HepG2 (cell line): ENCODE measurements at regions of chr17 and their contacts with region 1.

Region 1: DNA sequence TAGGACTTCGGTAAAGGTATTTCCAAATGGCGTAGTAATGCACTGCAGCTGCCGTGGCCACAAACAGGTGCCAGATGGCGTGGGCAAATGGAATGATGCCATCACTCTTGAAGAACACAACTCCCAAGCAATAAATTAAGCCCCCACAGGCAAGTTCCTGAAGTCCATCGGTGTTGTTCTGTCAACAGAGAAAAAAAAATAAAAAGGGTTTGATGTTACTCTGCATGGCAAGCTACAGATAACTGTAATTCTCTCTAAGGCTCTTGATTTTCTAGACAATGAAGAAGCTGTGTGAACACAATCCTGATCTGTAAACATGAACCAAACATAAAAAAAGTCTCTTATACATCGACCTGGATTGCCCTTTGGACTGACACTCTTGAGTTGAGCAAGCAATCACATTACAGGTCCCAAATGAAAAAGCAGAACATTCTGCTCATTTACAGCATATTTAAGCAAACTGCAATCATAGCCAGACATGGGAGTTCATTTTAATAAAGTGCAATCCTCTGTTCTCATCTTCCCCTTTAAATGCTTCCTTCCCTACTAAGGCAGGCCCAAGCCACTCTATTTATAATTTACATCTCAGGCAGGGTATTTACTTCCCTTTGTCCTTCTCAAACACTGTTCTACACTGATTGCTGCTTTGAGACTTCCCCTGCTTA is 27.1 kb downstream of the MMD start:
- DNase-seq: peak; percentile 96
- ATAC-seq: peak; percentile 79
- H3K4me3 ChIP-seq: peak overlapping the region in 1 of 3 experiments; percentile 0; a peak in 1 of 6 replicates
- H3K27ac ChIP-seq: peak overlapping the region; percentile 75
- H3K4me1 ChIP-seq: peaks cover 71% of the 10 kb centered on the region
- H3K27me3 ChIP-seq: no peaks in the 10 kb centered on the region
- CTCF ChIP-seq: no peak
- EP300 ChIP-seq: peak; percentile 31 to 91; a peak in 3 of 4 replicates
- POLR2A ChIP-seq: peak in 1 of 2 experiments; percentile 7; a peak in 2 of 4 replicates
- RAD21 ChIP-seq: no peak

Region 2: GRCh38 chr17:55410722-55411462 is 16.4 kb after region 1 on chr17:
- CTCF ChIA-PET with region 1: no interaction called
- POLR2A ChIA-PET with region 1: interaction called, 54 read pairs
- in situ Hi-C with region 1: no loop called
- intact Hi-C with region 1: loop called (anchors 1 kb)
- DNase-seq: peak; percentile 55
- ATAC-seq: no peak
- H3K4me3 ChIP-seq: no peak overlapping the region
- H3K27ac ChIP-seq: peak overlapping the region; percentile 87
- H3K4me1 ChIP-seq: peaks cover 100% of the 10 kb centered on the region
- H3K27me3 ChIP-seq: no peaks in the 10 kb centered on the region
- CTCF ChIP-seq: no peak
- EP300 ChIP-seq: 0 out of 4 replicates have a peak, but pooled peaks of 1 of the 2 experiments have one; percentile 31
- POLR2A ChIP-seq: no peak; a peak in 1 of 4 replicates
- RAD21 ChIP-seq: no peak

Region 3: DNA sequence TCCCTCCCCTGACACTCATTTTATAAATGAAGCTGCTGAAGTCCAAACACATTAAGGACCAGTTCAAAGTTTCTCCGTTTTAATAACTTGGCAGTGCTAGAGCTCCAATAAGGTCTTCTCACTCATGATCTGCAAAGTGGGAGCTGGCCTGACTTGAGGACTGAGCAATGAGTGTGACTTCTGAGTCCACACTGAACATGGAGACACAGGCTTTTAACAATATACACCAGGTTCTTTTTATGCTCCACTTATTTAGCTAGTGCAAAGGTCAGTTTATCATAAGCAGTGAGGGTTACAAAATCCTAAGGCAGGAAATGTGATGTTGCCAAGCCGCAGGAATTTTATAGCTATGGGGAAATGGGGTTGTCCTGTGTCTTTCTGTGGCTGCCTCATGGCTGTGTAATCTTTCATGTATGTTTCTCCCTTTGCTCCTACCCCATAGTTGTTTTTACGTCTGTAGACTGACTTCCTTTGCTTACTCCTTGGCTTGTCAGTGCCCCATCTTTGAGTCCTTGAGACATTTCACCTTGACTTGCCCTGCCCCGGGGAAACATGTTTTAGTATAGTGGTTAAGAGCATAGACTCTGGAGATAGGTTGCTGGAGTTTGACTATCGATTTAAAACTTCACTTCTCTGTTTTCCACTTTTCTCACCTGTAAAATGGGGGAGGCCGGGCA is 39.3 kb after region 1 on chr17:
- CTCF ChIA-PET with region 1: no interaction called
- POLR2A ChIA-PET with region 1: interaction called, 23 read pairs
- in situ Hi-C with region 1: no loop called
- intact Hi-C with region 1: loop called (anchors 1 kb)
- DNase-seq: peak; percentile 99
- ATAC-seq: peak; percentile 89
- H3K4me3 ChIP-seq: peak overlapping the region in 2 of 3 experiments; percentile 6 to 44; a peak in 2 of 6 replicates
- H3K27ac ChIP-seq: peak overlapping the region; percentile 92
- H3K4me1 ChIP-seq: peaks cover 80% of the 10 kb centered on the region
- H3K27me3 ChIP-seq: no peaks in the 10 kb centered on the region
- CTCF ChIP-seq: no peak
- EP300 ChIP-seq: peak; percentile 86 to 95; a peak in 3 of 4 replicates
- POLR2A ChIP-seq: peak; percentile 64 to 93
- RAD21 ChIP-seq: no peak

Region 4: DNA sequence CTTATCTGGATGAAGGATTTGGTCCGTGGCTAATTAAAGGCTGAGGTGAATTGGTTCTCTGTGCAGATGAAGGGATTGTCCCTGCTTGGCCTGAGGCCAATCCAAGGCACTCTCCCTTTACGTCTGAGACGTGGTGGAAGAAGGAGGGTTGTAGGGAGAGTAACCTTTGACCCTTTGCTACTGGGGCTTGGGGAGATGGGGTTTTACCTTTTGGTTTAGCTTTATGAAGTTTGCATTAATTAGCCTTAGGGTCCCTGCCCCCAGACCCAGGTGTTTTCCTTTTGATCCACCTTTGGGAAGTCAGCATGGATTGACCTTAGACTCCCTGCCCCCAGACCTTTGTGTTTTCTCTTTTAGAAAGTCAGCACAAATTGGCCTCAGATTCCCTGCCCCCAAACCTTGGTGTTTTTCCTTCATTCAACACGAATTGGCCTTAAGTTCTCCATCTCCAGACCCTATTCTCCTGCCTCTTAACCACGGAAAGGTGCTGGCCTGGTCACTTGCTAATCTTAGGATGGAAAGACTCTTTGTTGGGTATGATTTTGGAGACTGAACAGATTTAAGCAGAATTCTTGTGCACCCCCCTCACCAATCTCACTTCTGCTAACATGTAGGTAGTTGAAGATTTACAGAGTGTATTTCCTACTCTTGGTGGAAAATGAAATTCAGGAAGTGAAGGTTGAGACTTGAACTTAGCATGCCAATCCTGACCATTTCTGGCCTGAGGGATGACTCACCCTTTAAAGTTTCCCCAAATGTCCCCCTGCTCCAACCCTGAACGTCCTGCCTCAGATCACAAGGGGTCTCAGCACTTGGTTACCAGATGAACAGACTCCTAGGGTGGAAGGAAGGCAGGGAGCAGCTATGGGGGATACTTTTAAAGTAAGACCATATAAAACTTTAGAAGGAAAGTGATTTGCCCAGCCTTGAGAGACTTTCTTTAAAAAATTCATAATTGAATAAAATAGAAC is 50.3 kb after region 1 on chr17:
- CTCF ChIA-PET with region 1: no interaction called
- POLR2A ChIA-PET with region 1: interaction called, 18 read pairs
- in situ Hi-C with region 1: no loop called
- intact Hi-C with region 1: no loop called
- DNase-seq: peak; percentile 91
- ATAC-seq: peak; percentile 63
- H3K4me3 ChIP-seq: peak overlapping the region in 1 of 3 experiments; percentile 24; a peak in 1 of 6 replicates
- H3K27ac ChIP-seq: peak overlapping the region; percentile 88
- H3K4me1 ChIP-seq: peaks cover 94% of the 10 kb centered on the region
- H3K27me3 ChIP-seq: no peaks in the 10 kb centered on the region
- CTCF ChIP-seq: 0 out of 2 replicates have a peak, but pooled peaks have one; percentile 5
- EP300 ChIP-seq: peak in 1 of 2 experiments; percentile 64; a peak in 2 of 4 replicates
- POLR2A ChIP-seq: peak in 1 of 2 experiments; percentile 30; a peak in 3 of 4 replicates
- RAD21 ChIP-seq: no peak

Region 5: GRCh38 chr17:55513885-55514591 is 119.5 kb after region 1 on chr17:
- CTCF ChIA-PET with region 1: interaction called, 6 read pairs
- POLR2A ChIA-PET with region 1: interaction called, 7 read pairs
- in situ Hi-C with region 1: no loop called
- intact Hi-C with region 1: loop called (anchors 1 kb)
- DNase-seq: peak; percentile 84
- ATAC-seq: peak; percentile 81
- H3K4me3 ChIP-seq: no peak overlapping the region
- H3K27ac ChIP-seq: no peak overlapping the region
- H3K4me1 ChIP-seq: peaks cover 31% of the 10 kb centered on the region
- H3K27me3 ChIP-seq: peaks cover 0 to 1% of the 10 kb centered on the region in 2 experiments; a peak in 1 of 5 replicates
- CTCF ChIP-seq: peak; percentile 93
- EP300 ChIP-seq: 0 out of 4 replicates have a peak, but pooled peaks of 1 of the 2 experiments have one; percentile 12
- POLR2A ChIP-seq: no peak
- RAD21 ChIP-seq: peak; percentile 90

Region 6: DNA sequence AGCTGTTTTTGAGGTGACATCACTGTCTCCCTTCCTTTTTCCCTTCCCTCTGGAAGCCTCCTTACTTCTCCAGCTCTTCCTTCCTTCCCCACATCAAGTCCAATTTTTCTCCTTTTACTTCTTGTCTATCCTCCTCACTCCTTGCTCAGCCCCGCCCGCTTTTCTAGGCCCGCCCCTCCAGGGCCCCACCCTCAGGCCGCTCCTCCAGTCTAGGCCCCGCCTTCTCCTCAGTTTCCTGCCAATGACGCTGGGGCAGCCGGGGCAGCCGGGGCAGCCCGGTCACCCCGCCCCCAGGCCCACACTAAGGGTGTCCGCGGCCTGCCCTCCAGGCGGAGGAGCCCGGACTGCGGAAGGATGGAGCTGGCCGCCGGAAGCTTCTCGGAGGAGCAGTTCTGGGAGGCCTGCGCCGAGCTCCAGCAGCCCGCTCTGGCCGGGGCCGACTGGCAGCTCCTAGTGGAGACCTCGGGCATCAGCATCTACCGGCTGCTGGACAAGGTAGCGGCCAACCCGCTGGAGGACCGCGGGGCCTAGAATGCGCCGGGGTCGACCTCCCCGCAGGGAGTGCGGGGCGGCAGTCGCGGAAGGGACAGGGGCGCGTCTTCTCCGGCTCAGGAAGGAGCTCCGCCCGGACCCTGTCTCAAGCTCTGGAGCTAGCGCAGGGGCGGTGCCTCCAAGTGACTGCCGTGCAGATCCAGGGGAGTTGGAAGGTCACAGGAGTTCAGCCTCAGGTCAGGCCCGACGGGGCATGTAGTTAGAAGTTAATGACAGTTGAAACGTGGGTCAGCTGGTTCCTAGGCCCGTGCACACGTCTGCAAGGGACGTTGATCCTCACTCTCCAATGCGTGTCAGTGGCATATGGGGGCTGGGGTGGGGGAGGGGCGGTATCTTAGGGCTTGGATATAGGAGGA is 356.5 kb after region 1 on chr17 and contains the start of gene PCTP:
- CTCF ChIA-PET with region 1: no interaction called
- POLR2A ChIA-PET with region 1: no interaction called
- in situ Hi-C with region 1: loop called (anchors 25 kb)
- intact Hi-C with region 1: loop called (anchors 10 kb)
- DNase-seq: peak; percentile 87
- ATAC-seq: peak; percentile 99
- H3K4me3 ChIP-seq: peak within 1 kb of the TSS; percentile 84 to 93 (median 93)
- H3K27ac ChIP-seq: peak within 1 kb of the TSS; percentile 66
- H3K4me1 ChIP-seq: peaks cover 39% of the 10 kb centered on the region
- H3K27me3 ChIP-seq: no peaks in the 10 kb centered on the region; a peak in 1 of 5 replicates
- CTCF ChIP-seq: peak; percentile 50
- EP300 ChIP-seq: no peak
- POLR2A ChIP-seq: peak; percentile 74 to 80
- RAD21 ChIP-seq: peak; percentile 83
- total RNA-seq, gene PCTP: 50.7 and 66.3 TPM in 2 replicates